ENCODE measurements at regions of chr5 and their contacts with region 1.

Region 1: GRCh38 chr5:73454351-73455036 is 5.9 kb upstream of the FOXD1 start:
- DNase-seq: no peak
- ATAC-seq: peak in 1 of 2 donors; percentile 74
- H3K4me3 ChIP-seq: no peak overlapping the region
- H3K27ac ChIP-seq: no peak overlapping the region
- H3K4me1 ChIP-seq: peaks cover 5 to 7% of the 10 kb centered on the region in 2 donors
- H3K27me3 ChIP-seq: peaks cover 55 to 67% (median 61%) of the 10 kb centered on the region in 3 donors
- CTCF ChIP-seq: peak in 4 of 5 experiments; percentile 26 to 72 (median 47)
- POLR2A ChIP-seq: no peak

Region 2: GRCh38 chr5:73088026-73088425 is 366.5 kb before region 1 on chr5:
- in situ Hi-C with region 1: no loop called
- intact Hi-C with region 1: loop called (anchors 10 kb)
- DNase-seq: no peak
- ATAC-seq: no peak
- H3K4me3 ChIP-seq: no peak overlapping the region
- H3K27ac ChIP-seq: no peak overlapping the region
- H3K4me1 ChIP-seq: no peaks in the 10 kb centered on the region
- H3K27me3 ChIP-seq: no peaks in the 10 kb centered on the region
- CTCF ChIP-seq: no peak
- POLR2A ChIP-seq: no peak

Measured in gastrocnemius medialis (tissue), 4 donors.